Body of pancreas (tissue), 4 donors: ENCODE measurements at regions of chr16 and their contacts with region 1.

Region 1: DNA sequence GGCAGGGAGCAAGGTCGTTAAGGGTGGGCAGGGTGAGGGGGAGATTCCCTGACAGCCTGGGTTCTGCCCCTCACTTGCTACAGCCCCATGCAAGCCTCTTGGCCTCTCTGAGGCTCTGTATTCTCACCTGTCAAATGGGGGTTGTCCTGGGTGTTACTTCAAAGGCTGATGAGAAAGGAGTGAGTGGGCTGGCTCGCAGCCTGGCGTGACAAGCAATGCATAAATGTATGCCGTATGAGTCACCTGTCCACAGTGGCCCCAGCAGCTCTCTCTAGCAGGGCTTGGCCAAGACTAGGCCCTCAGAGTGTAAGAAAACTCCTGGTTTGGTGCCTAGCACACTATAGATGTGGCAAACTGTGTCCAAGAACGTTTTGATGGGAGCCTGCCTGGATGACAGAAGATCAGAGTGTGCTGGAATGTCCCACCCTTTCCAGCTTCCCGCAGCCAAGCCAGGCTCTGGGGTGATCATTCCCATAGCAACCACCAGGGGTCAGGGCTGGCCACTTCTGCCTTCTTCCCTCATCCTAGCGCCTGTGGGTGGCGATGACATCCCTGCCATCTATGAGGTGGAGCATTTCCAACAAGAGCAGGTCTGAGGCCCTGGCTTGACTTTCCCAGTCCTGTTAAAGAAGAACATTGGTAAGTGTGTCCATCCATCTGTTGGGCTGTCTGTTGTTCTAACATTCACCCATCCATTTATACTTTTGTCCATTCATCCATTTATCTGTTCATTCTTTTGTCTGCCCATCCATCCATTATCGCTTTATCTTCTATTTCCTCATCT is 37.2 kb upstream of the ADGRG1 start:
- DNase-seq: peak; percentile 77 to 83 (median 79)
- ATAC-seq: peak; percentile 92
- H3K4me3 ChIP-seq: no peak overlapping the region
- H3K27ac ChIP-seq: peak overlapping the region in 1 of 4 donors; percentile 25
- H3K4me1 ChIP-seq: no peaks in the 10 kb centered on the region
- H3K27me3 ChIP-seq: no peaks in the 10 kb centered on the region
- CTCF ChIP-seq: peak; percentile 72 to 96 (median 91)
- POLR2A ChIP-seq: no peak

Region 2: GRCh38 chr16:57648590-57649442 is 57.5 kb after region 1 on chr16:
- intact Hi-C with region 1: loop called (anchors 5 kb)
- DNase-seq: peak; percentile 78 to 89 (median 84)
- ATAC-seq: peak; percentile 84
- H3K4me3 ChIP-seq: no peak overlapping the region
- H3K27ac ChIP-seq: peak overlapping the region in 2 of 4 donors; percentile 6 to 42
- H3K4me1 ChIP-seq: peaks cover 6% of the 10 kb centered on the region
- H3K27me3 ChIP-seq: no peaks in the 10 kb centered on the region
- CTCF ChIP-seq: peak; percentile 99 to 100 (median 100)
- POLR2A ChIP-seq: no peak

Region 3: GRCh38 chr16:57694725-57695679 is 103.7 kb after region 1 on chr16 and contains the start of gene DRC7:
- intact Hi-C with region 1: no loop called
- DNase-seq: peak; percentile 78 to 91 (median 84)
- ATAC-seq: peak; percentile 91
- H3K4me3 ChIP-seq: no peak within 1 kb of the TSS
- H3K27ac ChIP-seq: peak within 1 kb of the TSS; percentile 36 to 92 (median 72)
- H3K4me1 ChIP-seq: peaks cover 45% of the 10 kb centered on the region
- H3K27me3 ChIP-seq: no peaks in the 10 kb centered on the region
- CTCF ChIP-seq: no peak
- POLR2A ChIP-seq: peak in 1 of 3 donors; percentile 17
- total RNA-seq, gene DRC7: 1.3 TPM in 1 of 2 donors, not detected in the other

Region 4: GRCh38 chr16:57718011-57718410 is 126.7 kb after region 1 on chr16:
- intact Hi-C with region 1: loop called (anchors 5 kb)
- DNase-seq: no peak
- ATAC-seq: no peak
- H3K4me3 ChIP-seq: no peak overlapping the region
- H3K27ac ChIP-seq: no peak overlapping the region
- H3K4me1 ChIP-seq: no peaks in the 10 kb centered on the region
- H3K27me3 ChIP-seq: no peaks in the 10 kb centered on the region
- CTCF ChIP-seq: no peak
- POLR2A ChIP-seq: no peak